Right lobe of liver (tissue), 6 donors: ENCODE measurements at regions of chr17 and their contacts with region 1.

Region 1: GRCh38 chr17:4420692-4421131 is 13.0 kb upstream of the SPNS3 start:
- DNase-seq: peak in 1 of 3 donors; percentile 62
- ATAC-seq: peak; percentile 95 to 97 (median 95)
- H3K4me3 ChIP-seq: no peak overlapping the region
- H3K27ac ChIP-seq: no peak overlapping the region
- H3K4me1 ChIP-seq: no peaks in the 10 kb centered on the region
- H3K27me3 ChIP-seq: no peaks in the 10 kb centered on the region
- CTCF ChIP-seq: peak; percentile 82 to 93 (median 89)
- POLR2A ChIP-seq: no peak

Region 2: DNA sequence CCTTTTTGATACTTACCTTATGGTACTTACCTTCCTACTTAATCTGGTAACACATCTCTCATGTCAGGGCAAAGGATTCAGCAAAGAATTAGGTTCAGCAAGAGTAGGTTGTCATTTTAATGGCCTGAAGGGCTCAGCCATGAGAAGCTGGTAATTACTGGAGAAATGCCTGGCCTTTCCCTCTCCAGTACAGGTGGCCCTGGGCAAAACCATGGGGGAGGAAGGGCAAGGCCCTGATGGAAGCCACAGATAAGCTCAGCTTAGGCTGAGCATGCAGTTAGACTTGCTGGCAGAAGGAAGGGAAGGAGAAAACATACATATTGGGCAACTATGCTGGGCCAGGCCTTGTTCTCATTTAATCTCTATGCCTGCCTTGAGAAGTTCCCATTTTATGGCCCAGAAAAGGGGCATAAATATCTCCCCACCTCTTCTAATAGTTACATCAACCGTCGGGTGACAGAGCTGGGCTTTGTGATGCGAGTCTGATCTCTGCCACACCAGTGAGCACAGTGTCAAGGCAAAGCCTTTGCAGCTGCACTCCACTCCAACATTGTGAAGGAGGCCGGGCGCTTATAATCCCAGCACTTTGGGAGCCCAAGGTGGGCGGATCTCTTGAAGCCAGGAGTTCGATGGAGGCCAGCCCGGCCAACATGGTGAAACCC is 259.0 kb before region 1 on chr17:
- intact Hi-C with region 1: no loop called
- DNase-seq: no peak
- ATAC-seq: peak; percentile 8 to 58 (median 27)
- H3K4me3 ChIP-seq: no peak overlapping the region
- H3K27ac ChIP-seq: no peak overlapping the region
- H3K4me1 ChIP-seq: no peaks in the 10 kb centered on the region
- H3K27me3 ChIP-seq: no peaks in the 10 kb centered on the region
- CTCF ChIP-seq: no peak
- POLR2A ChIP-seq: no peak

Region 3: DNA sequence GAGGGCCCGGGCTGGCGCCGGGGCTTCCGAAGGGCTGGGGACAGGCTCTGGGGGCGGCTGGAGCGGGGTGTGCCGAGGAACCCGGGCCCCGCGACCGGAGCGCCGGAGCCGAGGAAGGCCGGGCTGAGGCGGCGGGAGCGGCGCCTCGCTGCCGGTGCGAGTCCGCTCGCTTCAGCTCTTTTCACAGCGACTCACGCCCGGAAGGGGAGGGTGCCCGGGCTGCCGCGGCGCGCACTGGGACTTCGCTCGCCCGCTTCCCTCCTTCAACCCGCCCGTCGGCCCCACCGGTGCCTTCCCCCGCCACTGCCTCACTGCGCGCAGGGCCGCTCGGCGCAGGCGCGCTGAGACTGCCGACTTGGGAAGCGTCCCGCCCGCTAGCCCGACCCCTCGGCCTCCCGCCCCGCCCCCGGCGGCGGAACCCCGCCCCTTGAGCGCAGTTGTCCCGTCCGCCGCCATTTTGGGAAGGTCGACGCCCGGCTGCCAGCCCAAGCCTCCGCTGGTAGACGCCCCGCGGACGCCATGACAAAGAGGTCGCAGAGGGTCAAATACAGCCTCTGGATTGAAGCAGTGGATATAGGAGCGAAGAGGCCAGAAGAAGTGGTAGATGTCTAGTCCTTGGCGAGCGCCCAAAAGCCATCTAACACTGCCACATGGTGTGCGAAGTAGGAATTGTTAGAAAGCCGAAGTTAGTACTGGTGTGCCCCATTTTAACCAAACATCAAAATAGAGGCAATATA is 54.2 kb before region 1 on chr17 and contains the start of gene UBE2G1:
- intact Hi-C with region 1: no loop called
- DNase-seq: peak; percentile 99
- ATAC-seq: peak; percentile 91 to 95 (median 92)
- H3K4me3 ChIP-seq: peak within 1 kb of the TSS; percentile 96 to 100 (median 99)
- H3K27ac ChIP-seq: peak within 1 kb of the TSS; percentile 83 to 95 (median 95)
- H3K4me1 ChIP-seq: peaks cover 0 to 9% (median 4%) of the 10 kb centered on the region in 4 donors
- H3K27me3 ChIP-seq: no peaks in the 10 kb centered on the region
- CTCF ChIP-seq: peak; percentile 6 to 31 (median 26)
- POLR2A ChIP-seq: peak; percentile 95
- total RNA-seq, gene UBE2G1: 30.3 to 45.5 (median 38.8) TPM

Region 4: GRCh38 chr17:4499431-4500187 is 78.9 kb after region 1 on chr17:
- intact Hi-C with region 1: loop called in 1 of 2 experiments (anchors 10 kb)
- DNase-seq: peak in 2 of 3 donors; percentile 56 to 68
- ATAC-seq: peak; percentile 16 to 22 (median 19)
- H3K4me3 ChIP-seq: peak overlapping the region; percentile 39 to 59 (median 42)
- H3K27ac ChIP-seq: peak overlapping the region in 1 of 3 donors; percentile 67
- H3K4me1 ChIP-seq: peaks cover 0 to 15% (median 4%) of the 10 kb centered on the region in 4 donors
- H3K27me3 ChIP-seq: no peaks in the 10 kb centered on the region
- CTCF ChIP-seq: no peak
- POLR2A ChIP-seq: no peak

Region 5: DNA sequence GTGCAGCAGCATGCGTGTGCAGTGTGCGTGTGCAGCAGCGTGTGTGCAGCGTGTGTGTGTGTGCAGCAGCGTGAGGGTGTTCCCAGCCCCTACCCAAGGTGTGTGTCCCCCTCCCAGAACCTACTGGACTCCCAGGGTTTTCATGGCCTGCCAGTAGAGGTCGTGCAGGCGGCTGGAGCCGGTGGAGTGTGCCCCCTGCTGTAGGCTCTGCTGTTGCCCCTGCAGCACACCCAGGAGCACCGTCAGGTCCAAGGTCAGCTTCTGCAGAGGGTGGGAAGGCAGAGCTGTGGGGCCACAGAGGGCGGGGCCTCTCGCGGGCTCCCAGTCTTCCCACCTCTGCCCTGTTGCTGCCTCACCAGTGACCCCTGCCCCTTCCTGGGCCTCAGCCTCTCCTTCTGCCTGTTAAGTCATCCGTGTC is 119.5 kb after region 1 on chr17:
- intact Hi-C with region 1: loop called in 1 of 2 experiments (anchors 10 kb)
- DNase-seq: no peak
- ATAC-seq: peak in 3 of 4 donors; percentile 2 to 6 (median 4)
- H3K4me3 ChIP-seq: no peak overlapping the region
- H3K27ac ChIP-seq: no peak overlapping the region
- H3K4me1 ChIP-seq: peaks cover 0 to 7% (median 0%) of the 10 kb centered on the region in 4 donors
- H3K27me3 ChIP-seq: no peaks in the 10 kb centered on the region
- CTCF ChIP-seq: peak in 2 of 4 donors; percentile 7 to 25
- POLR2A ChIP-seq: no peak

Region 6: GRCh38 chr17:4939796-4940624 is 519.3 kb after region 1 on chr17 and contains the starts of genes RNF167 and SLC25A11:
- intact Hi-C with region 1: no loop called
- DNase-seq: peak; percentile 94 to 97 (median 96)
- ATAC-seq: peak; percentile 87 to 94 (median 90)
- H3K4me3 ChIP-seq: peak within 1 kb of the TSS; percentile 83 to 95 (median 87)
- H3K27ac ChIP-seq: peak within 1 kb of the TSS; percentile 77 to 93 (median 83)
- H3K4me1 ChIP-seq: peaks cover 0 to 24% (median 11%) of the 10 kb centered on the region in 4 donors
- H3K27me3 ChIP-seq: no peaks in the 10 kb centered on the region
- CTCF ChIP-seq: no peak
- POLR2A ChIP-seq: peak; percentile 67
- total RNA-seq, gene RNF167: 52.1 to 73.5 (median 57.5) TPM
- total RNA-seq, gene SLC25A11: 32.6 to 64.2 (median 41.0) TPM